Right ventricle myocardium superior (tissue), 1 donor: ENCODE measurements at regions of chr5 and their contacts with region 1.

Region 1: DNA sequence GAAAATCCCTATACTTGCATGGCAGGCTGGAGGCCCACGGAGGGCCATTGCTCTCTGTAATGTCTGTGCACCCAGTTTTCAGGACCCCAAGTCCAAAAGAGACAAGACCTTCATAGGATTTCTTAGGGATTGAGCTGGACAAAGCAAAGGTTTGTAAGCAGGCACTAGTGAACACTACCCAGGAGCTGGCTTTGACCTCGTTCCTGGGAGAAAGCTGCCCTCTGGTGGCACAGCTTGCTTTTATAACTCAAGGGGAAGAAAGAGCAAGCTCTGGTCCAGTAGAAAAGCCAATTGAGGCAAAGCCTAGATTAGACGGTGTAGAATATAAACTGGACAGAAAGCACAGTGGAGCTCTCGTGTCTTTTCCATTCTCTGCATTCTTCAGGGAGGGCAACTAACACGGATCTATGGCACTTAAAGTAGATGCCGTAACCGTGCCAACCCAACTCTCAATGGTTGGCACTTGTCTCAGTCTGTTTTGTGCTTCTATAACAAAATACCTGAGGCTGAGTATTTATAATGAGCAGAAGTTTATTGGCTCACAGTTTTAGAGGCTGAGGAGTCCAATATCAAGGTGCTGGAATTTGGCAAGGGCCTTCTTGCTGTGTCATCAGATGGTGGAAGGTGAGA is 7.9 kb downstream of the GABRP start:
- DNase-seq: peak; percentile 62
- ATAC-seq: peak; percentile 91

Region 2: GRCh38 chr5:170638454-170639220 is 152.8 kb before region 1 on chr5:
- intact Hi-C with region 1: loop called (anchors 5 kb)
- DNase-seq: peak; percentile 72
- ATAC-seq: peak; percentile 79

Region 3: GRCh38 chr5:170745481-170746071 is 45.9 kb before region 1 on chr5:
- intact Hi-C with region 1: loop called (anchors 2 kb)
- DNase-seq: peak; percentile 76
- ATAC-seq: peak; percentile 75

Region 4: GRCh38 chr5:170874017-170874416 is 82.6 kb after region 1 on chr5:
- intact Hi-C with region 1: no loop called
- DNase-seq: no peak
- ATAC-seq: no peak